Adrenal gland (tissue), 19 donors: ENCODE measurements at regions of chr10 and their contacts with region 1.

Region 1: DNA sequence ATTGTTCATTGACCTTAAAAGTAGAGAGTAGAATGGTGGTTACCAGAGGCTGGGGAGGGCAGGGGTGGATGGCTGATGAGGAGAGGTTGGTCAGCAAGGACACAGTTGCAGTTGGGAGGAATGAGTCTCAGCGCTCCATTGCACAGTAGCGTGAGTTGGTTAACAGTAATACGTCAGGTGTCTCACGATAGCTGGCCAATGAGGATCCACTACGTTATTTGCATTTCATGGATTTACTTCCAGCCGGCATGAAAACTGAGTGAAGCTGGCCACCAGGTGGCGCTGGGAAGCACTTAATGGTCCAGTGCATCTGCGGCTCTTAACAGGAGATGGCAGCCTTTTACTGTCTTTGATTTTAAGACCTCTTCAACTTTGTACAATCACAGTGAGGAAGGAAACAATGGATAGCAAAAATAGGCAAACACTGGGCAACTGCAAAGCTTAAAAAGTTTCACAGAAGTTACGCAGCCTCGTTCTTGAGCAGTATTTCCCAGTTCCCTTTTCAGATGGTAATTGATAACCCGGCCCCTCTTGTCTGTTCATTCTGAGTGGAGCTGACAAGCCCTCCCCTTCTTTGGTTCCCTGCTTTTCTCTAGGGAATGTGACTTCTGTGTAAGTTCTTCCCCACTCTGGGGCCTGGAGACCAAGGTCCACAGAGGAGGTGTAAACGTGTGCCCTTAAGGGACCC is 23.7 kb downstream of the AKR1E2 start:
- DNase-seq: peak; percentile 89 to 98 (median 95)
- H3K4me3 ChIP-seq: no peak overlapping the region
- H3K27ac ChIP-seq: peak overlapping the region in 1 of 5 donors; percentile 9
- H3K4me1 ChIP-seq: peaks cover 0 to 22% of the 10 kb centered on the region in 2 donors
- H3K27me3 ChIP-seq: no peaks in the 10 kb centered on the region
- CTCF ChIP-seq: peak; percentile 98 to 100 (median 100)
- POLR2A ChIP-seq: no peak

Region 2: GRCh38 chr10:4981722-4982471 is 132.2 kb after region 1 on chr10:
- intact Hi-C with region 1: loop called in 1 of 2 experiments (anchors 10 kb)
- DNase-seq: peak in 6 of 7 donors; percentile 26 to 74 (median 41)
- H3K4me3 ChIP-seq: no peak overlapping the region
- H3K27ac ChIP-seq: peak overlapping the region in 2 of 5 donors; percentile 2 to 63
- H3K4me1 ChIP-seq: no peaks in the 10 kb centered on the region
- H3K27me3 ChIP-seq: no peaks in the 10 kb centered on the region
- CTCF ChIP-seq: peak; percentile 20 to 67 (median 54)
- POLR2A ChIP-seq: no peak

Region 3: GRCh38 chr10:5002013-5002727 is 152.5 kb after region 1 on chr10:
- intact Hi-C with region 1: no loop called
- DNase-seq: no peak
- H3K4me3 ChIP-seq: no peak overlapping the region
- H3K27ac ChIP-seq: no peak overlapping the region
- H3K4me1 ChIP-seq: no peaks in the 10 kb centered on the region
- H3K27me3 ChIP-seq: no peaks in the 10 kb centered on the region
- CTCF ChIP-seq: no peak
- POLR2A ChIP-seq: no peak

Region 4: GRCh38 chr10:5105626-5106025 is 255.9 kb after region 1 on chr10:
- intact Hi-C with region 1: loop called in 1 of 2 experiments (anchors 10 kb)
- DNase-seq: peak; percentile 20 to 66 (median 52)
- H3K4me3 ChIP-seq: no peak overlapping the region
- H3K27ac ChIP-seq: no peak overlapping the region
- H3K4me1 ChIP-seq: no peaks in the 10 kb centered on the region
- H3K27me3 ChIP-seq: no peaks in the 10 kb centered on the region
- CTCF ChIP-seq: no peak
- POLR2A ChIP-seq: no peak

Region 5: DNA sequence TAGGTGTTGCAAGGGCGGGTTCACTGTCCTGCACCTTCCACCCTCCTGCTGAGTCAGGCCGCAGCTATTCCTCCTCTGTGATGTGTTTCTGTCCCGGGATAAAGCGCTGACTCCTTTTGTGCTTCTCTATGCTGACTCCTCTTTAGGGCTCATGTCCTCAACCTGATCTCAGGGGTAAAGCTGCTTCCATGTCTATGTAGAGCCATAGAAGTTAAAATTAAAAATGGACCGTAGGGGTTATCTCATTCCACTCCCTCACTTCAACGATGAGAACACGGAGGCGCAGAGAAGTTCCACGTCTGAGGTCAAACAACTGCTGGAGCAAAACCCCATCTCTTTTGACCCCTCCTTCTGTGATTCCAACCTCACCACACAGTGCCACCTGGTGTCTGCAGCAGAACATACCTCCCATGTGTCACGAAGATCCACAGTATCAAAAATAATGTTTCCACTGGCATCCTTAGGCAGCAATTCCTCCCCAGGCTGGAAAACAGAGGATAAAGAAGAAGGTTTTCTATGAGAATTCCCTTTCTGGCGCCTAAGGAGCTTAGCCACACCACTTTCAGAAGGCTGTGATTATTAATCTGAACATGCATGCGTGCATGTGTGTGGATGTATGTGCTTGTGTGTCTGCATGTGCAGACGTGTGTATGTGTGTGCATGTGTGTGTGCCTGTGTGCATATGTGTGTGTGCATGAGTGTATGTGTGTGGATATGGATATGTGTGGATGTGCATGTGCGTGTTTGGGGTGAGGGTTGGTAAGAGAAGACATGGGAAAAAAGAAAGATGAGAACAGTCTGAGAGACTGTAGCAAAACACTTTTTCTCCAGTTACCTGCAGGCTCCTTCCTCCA is 433.8 kb after region 1 on chr10:
- intact Hi-C with region 1: loop called (anchors 5 to 10 kb)
- DNase-seq: peak; percentile 48 to 83 (median 68)
- H3K4me3 ChIP-seq: no peak overlapping the region
- H3K27ac ChIP-seq: no peak overlapping the region
- H3K4me1 ChIP-seq: no peaks in the 10 kb centered on the region
- H3K27me3 ChIP-seq: no peaks in the 10 kb centered on the region
- CTCF ChIP-seq: peak; percentile 57 to 80 (median 68)
- POLR2A ChIP-seq: no peak

Region 6: DNA sequence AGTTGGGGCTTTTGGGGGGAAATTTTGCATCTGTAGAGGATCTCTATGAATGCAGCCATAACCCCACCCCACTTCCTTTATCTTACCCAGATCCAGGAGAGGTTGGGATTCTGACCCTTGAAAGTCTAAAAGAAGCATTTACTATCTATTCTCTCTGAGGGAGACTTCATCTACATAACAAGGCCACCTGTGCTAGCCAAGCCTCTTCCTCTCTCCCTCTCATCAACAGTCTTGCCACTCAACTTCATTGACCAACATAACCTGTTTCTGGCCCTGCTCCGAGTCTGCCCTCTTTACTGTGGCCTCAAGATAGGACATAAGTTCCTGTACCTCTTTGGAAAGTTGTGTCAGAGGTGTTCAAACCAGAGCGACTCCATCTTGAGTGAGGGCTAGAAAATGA is 535.5 kb after region 1 on chr10:
- intact Hi-C with region 1: loop called in 1 of 2 experiments (anchors 10 kb)
- DNase-seq: no peak
- H3K4me3 ChIP-seq: no peak overlapping the region
- H3K27ac ChIP-seq: no peak overlapping the region
- H3K4me1 ChIP-seq: no peaks in the 10 kb centered on the region
- H3K27me3 ChIP-seq: no peaks in the 10 kb centered on the region
- CTCF ChIP-seq: no peak
- POLR2A ChIP-seq: no peak